ENCODE measurements at regions of chr15 and their contacts with region 1.

Region 1: DNA sequence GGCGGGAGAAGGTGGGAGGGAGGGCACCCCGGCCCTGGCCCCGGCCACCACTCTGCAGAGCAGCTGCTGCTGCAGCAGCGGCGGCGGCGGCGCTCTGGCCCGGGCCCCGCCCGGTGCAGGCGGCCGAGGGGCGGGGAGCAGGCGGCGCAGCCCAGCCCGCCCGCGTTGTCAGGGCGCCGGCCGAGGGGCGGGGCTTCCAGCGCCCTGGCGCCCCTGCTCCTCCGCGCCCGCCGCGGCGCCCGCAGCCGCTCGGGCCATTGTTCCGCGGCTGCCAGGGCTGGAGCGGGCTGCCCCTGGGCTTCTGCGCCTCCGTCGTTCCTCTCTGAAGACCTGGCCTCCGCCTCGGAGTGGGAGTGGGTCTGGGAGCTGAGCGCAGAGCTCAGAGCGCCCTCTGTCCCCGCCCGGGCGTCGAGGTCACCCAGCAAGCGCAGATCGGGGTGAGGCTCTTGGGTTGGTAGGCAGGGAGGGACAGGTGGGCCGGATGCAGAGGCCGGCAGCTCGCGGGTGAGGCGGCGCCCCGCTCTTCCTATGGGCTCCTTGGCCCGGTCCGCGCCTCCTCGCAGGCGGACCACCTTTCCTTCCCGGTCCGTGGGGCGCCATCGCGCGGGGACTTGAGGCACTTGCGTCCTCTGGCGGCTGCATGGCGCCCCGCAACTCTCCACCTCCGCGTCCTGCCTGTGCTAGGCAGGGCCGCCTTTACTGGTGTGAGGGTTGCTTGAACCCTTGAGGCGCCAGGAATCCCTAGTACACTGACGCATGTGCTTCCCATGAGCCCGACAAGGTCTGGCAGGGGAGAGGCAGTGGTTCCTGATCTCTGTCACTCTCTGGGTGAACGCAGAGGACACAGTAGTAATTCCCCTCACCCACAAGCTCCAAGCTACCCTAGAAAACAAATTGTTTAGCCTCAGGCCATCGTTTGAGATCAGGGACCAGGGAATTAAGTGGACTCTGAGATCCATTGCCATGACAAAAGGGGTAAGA is at the start of gene LPCAT4:
- DNase-seq: no peak
- H3K4me3 ChIP-seq: peak within 1 kb of the TSS; percentile 76 to 91
- H3K27ac ChIP-seq: peak within 1 kb of the TSS; percentile 99
- H3K4me1 ChIP-seq: peaks cover 28% of the 10 kb centered on the region
- H3K27me3 ChIP-seq: no peaks in the 10 kb centered on the region
- CTCF ChIP-seq: peak; percentile 65 to 97 (median 93)
- POLR2A ChIP-seq: peak in 1 of 2 donors; percentile 6
- total RNA-seq, gene LPCAT4: 47.4 TPM

Region 2: DNA sequence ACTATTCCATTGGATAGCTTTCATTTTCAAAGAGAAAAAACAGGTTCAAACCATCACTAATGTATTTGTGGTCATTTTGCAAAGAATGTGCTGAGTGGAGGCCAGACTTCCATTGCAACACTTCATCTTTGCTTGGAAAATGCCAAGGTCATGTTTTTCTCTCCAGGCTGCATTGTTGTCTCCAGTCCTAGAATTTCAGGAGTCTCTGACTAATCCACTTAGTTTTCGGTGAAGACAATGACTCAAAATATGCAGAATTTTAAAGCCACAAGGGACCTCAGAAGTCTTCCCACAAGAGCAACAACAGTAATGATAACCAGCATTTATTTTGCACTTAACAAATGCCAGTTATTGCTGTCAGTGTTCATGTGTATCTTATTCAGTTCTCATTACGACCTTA is 779.6 kb before region 1 on chr15:
- intact Hi-C with region 1: no loop called
- DNase-seq: no peak
- H3K4me3 ChIP-seq: no peak overlapping the region
- H3K27ac ChIP-seq: no peak overlapping the region
- H3K4me1 ChIP-seq: no peaks in the 10 kb centered on the region
- H3K27me3 ChIP-seq: no peaks in the 10 kb centered on the region
- CTCF ChIP-seq: no peak
- POLR2A ChIP-seq: no peak

Region 3: DNA sequence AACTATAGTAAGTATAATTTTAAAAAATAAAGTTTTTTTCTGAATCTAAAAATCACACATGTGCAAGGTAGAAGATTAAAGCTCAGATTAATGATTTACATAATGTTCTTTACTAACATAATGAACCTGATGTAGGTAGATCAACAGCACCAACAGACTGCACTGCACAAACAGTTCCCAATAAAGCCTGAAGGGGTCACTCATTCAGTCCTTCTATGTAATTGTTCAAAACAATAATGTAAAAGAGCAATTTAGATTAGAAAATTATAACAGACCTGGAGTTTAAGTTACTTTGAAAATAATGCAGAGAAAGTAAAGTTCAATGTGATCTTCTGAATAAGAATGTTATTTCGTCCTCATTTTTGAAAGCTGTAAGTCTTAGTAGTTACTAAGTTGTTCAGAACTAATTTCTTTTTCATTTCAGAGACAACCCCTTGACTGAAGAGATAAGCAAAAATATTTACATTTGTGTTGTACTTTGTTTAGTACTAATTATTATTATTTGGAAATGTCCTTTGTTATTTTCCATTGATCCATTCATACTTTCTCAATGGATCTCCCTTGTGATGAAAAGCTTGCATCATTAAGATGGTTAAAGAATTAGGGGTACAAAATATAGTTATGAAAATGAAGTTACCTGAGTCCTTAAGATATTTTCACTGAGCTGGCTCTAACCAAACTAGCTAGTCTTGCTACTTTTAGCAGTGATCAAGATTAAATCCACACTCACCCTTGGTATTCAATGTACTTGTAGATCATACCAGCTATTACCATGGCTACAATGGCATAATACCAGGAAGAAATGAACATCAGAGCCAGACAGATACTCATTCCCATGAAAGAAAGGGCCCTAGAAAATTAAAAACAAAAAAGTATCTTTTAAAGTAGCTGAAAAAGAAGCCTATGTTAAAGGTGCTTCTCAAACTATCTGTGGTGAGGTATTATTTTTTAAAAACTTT is 125.7 kb before region 1 on chr15:
- intact Hi-C with region 1: loop called (anchors 10 kb)
- DNase-seq: no peak
- H3K4me3 ChIP-seq: no peak overlapping the region
- H3K27ac ChIP-seq: no peak overlapping the region
- H3K4me1 ChIP-seq: no peaks in the 10 kb centered on the region
- H3K27me3 ChIP-seq: no peaks in the 10 kb centered on the region
- CTCF ChIP-seq: peak in 1 of 3 experiments; percentile 52
- POLR2A ChIP-seq: no peak

Region 4: GRCh38 chr15:34342737-34343575 is 24.4 kb before region 1 on chr15 and contains the starts of genes NOP10 and NUTM1:
- intact Hi-C with region 1: loop called (anchors 2 kb)
- DNase-seq: peak in 1 of 2 donors; percentile 95
- H3K4me3 ChIP-seq: peak within 1 kb of the TSS; percentile 58 to 71
- H3K27ac ChIP-seq: peak within 1 kb of the TSS; percentile 65
- H3K4me1 ChIP-seq: peaks cover 30% of the 10 kb centered on the region
- H3K27me3 ChIP-seq: no peaks in the 10 kb centered on the region
- CTCF ChIP-seq: peak; percentile 79 to 92 (median 80)
- POLR2A ChIP-seq: peak in 1 of 2 donors; percentile 53
- total RNA-seq, gene NOP10: 150 TPM
- total RNA-seq, gene NUTM1: not detected

Measured in vagina (tissue), 2 donors.